Panc1 (cell line): ENCODE measurements at regions of chr12 and their contacts with region 1.

Region 1: GRCh38 chr12:108803428-108804105 is 53.8 kb downstream of the SSH1 start:
- DNase-seq: peak; percentile 78
- ATAC-seq: peak; percentile 88
- H3K4me3 ChIP-seq: no peak overlapping the region
- H3K27ac ChIP-seq: peak overlapping the region; percentile 42
- H3K4me1 ChIP-seq: peaks cover 11% of the 10 kb centered on the region
- H3K27me3 ChIP-seq: no peaks in the 10 kb centered on the region
- CTCF ChIP-seq: peak; percentile 94

Region 2: DNA sequence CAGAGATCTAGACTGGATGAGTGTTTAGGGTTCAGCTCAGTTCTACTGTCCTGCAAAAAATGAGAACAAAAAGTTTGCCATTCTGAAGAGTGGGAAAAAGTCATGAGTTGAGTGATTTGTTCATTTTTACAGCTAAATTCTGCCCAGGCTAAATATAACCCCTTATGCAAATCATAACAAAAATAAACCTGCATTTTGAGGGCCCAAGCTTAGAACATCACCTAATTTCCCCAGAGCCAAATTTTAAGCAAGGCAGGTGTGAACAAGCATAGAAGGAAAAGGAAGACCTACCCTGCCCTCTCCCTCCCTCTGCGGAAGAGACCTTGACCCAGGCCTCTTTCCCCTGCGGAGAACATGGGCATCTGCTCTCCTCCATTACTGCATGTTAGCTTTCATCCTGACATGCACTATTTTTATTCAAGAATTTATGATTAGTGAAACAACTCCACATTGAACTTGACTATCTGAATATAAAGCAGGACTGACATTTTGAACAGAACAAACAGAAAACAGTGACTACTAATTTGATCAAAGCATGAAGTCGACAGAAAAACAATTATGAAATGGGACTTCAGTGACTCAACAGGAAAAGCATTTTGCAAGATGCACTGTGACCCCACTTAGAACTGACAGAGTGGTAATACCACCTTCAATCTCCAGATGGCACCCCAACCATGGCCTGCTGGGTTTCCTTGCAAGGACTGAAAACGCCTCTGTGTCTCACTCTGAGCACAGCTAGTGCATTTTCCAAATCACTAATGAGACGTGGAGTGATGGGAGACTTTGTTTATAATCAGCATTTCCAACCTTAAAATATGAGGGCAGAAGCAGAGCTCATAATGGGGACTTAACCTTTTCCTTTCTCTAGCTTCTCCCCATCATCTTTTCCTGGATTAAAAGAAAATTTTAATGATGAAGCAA is 139.0 kb before region 1 on chr12:
- CTCF ChIA-PET with region 1: interaction called, 15 read pairs
- POLR2A ChIA-PET with region 1: no interaction called
- in situ Hi-C with region 1: no loop called
- intact Hi-C with region 1: loop called (anchors 2 kb)
- DNase-seq: peak; percentile 89
- ATAC-seq: peak; percentile 95
- H3K4me3 ChIP-seq: no peak overlapping the region
- H3K27ac ChIP-seq: peak overlapping the region; percentile 75
- H3K4me1 ChIP-seq: peaks cover 17% of the 10 kb centered on the region
- H3K27me3 ChIP-seq: no peaks in the 10 kb centered on the region
- CTCF ChIP-seq: peak; percentile 95

Region 3: DNA sequence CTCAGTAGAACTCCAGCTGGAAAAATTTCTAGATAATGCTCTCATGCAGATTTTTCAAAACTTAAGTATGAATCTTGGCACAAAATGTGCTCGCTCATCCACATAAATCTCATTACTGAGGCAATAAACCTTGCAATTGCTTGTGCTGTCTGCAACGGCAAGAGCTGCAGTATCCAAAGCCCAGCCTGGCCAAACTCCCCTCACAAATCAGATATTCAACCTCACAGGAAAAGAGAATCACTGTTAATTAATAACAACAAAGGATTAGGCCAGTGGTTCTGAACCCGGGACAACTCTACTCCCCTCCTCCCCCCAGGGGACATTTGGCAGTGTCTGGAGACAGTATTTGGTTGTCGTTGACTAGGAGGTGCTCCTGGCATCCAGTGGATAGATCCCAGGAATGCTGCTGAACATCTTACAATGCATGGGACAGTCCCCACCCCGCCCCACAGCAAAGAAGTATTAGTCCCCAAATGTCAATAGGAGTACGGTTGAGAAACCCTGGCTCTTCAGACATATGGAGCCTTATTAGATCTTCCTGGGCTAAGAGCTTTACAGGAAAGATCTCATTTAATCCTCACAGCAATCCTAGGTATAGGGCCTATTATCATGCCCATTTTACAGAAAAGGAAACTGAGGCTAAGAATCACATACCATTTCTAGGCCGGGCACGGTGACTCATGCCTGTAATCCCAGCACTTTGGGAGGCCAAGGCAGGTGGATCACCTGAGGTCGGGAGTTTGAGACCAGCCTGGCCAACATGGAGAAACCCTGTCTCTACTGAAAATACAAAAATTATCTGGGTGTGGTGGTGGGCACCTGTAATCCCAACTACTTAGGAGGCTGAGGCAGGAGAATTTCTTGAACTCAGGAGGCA is 52.8 kb before region 1 on chr12:
- CTCF ChIA-PET with region 1: no interaction called
- POLR2A ChIA-PET with region 1: interaction called, 11 read pairs
- in situ Hi-C with region 1: no loop called
- intact Hi-C with region 1: no loop called
- DNase-seq: no peak
- ATAC-seq: no peak
- H3K4me3 ChIP-seq: no peak overlapping the region
- H3K27ac ChIP-seq: no peak overlapping the region
- H3K4me1 ChIP-seq: no peaks in the 10 kb centered on the region
- H3K27me3 ChIP-seq: no peaks in the 10 kb centered on the region
- CTCF ChIP-seq: no peak

Region 4: DNA sequence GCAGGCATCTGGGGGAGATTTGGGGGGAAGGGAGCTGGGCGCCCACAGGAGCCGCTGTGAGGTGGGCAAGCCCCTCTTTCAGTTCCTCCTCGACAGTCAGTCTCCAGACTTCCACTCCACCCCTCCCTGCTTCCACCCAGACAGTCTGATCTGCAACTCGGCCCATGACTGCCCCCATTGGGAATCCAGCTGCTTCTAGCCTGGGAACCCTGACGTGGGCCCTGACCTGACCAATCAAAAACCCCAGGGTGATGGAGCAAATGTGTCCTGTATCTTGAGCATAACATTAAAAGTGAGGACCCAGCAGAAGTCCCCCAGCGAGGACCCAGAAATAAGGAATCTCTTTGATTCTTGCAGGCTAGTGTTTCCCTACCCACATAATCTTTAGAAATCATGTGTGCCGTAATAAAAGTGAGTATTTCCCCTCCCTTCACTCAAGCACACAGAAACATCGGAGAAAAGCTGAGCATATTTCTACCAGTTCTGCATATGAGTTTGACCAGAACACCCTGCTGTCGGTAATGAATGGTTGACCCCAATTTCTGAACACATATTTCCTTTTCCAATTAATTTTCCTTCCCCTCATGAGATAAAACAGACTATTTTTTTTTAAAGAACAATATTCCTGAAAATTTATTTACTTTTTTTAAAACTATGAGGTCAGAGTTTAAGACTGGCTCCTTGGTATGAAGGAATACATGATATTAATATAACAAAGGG is 47.4 kb after region 1 on chr12:
- CTCF ChIA-PET with region 1: interaction called, 4 read pairs
- POLR2A ChIA-PET with region 1: interaction called, 12 read pairs
- in situ Hi-C with region 1: no loop called
- intact Hi-C with region 1: no loop called
- DNase-seq: no peak
- ATAC-seq: peak; percentile 81
- H3K4me3 ChIP-seq: peak overlapping the region in 1 of 2 experiments; percentile 6; a peak in 1 of 4 replicates
- H3K27ac ChIP-seq: peak overlapping the region; percentile 89
- H3K4me1 ChIP-seq: peaks cover 53% of the 10 kb centered on the region
- H3K27me3 ChIP-seq: no peaks in the 10 kb centered on the region
- CTCF ChIP-seq: no peak; the same call in 1 of the 2 replicates

Region 5: GRCh38 chr12:108861878-108862587 is 58.5 kb after region 1 on chr12:
- CTCF ChIA-PET with region 1: no interaction called
- POLR2A ChIA-PET with region 1: no interaction called
- in situ Hi-C with region 1: no loop called
- intact Hi-C with region 1: no loop called
- DNase-seq: no peak
- ATAC-seq: no peak
- H3K4me3 ChIP-seq: no peak overlapping the region
- H3K27ac ChIP-seq: no peak overlapping the region
- H3K4me1 ChIP-seq: peaks cover 11% of the 10 kb centered on the region
- H3K27me3 ChIP-seq: no peaks in the 10 kb centered on the region
- CTCF ChIP-seq: no peak